PC-3 (cell line): ENCODE measurements at regions of chr13 and their contacts with region 1.

Region 1: DNA sequence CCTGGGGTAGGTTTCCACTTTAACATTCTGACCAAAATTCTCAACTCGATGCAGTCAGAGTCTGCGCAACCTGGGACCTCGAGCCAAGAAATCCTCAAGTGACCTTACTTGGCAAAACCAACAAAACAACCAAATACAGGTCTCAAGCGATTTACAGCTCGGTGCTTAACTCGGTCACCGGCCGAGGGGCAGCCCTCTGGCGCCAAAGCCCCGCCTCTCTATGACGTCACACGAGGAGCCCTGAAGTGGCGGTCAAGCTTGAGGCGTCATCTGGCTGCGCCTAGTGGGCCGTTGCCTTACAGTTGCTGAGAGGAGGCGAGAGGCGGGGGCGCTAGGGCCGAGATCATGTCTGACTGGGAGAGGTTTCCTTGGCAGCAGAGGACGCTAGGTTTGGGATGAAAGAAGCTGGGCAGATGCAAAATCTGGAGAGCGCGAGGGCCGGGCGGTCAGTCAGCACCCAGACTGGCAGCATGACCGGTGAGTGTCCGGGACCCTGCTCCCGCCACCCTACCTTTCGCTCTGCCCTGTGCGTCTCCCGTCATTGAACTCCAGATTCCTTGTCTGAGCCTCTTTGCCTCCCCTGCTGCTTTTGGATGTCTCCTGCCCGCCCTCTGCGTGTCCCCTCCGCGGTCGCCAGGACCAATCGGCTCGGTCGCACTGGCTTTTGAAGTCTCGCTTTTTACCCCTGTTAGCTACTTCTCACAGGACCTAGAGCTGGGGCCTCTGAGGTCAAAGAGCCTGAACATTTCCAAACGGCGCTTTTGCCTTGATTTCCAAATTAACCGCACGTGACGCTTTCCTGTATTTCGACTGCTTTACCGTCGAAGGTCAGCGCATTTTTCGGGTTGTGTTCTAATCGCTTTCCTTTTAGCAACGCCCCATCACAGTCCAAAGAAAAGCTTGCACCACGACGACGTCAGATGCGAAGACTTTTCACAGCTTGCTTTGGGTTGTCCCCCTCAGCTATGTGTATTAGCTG is at the start of gene CDADC1:
- DNase-seq: peak; percentile 93
- ATAC-seq: peak; percentile 92
- H3K4me3 ChIP-seq: peak within 1 kb of the TSS; percentile 87
- H3K27ac ChIP-seq: 0 out of 2 replicates have a peak within 1 kb of the TSS, but pooled peaks have one; percentile 26
- H3K4me1 ChIP-seq: no peaks in the 10 kb centered on the region
- H3K27me3 ChIP-seq: no peaks in the 10 kb centered on the region
- CTCF ChIP-seq: no peak
- total RNA-seq, gene CDADC1: 3.7 and 17.6 TPM in 2 replicates

Region 2: GRCh38 chr13:49278211-49278610 is 30.3 kb after region 1 on chr13:
- CTCF ChIA-PET with region 1: interaction called, 7 read pairs
- POLR2A ChIA-PET with region 1: no interaction called
- intact Hi-C with region 1: loop called (anchors 2 kb)
- DNase-seq: no peak
- ATAC-seq: no peak
- H3K4me3 ChIP-seq: no peak overlapping the region
- H3K27ac ChIP-seq: no peak overlapping the region
- H3K4me1 ChIP-seq: no peaks in the 10 kb centered on the region
- H3K27me3 ChIP-seq: no peaks in the 10 kb centered on the region
- CTCF ChIP-seq: no peak

Region 3: GRCh38 chr13:49347646-49348385 is 99.9 kb after region 1 on chr13:
- CTCF ChIA-PET with region 1: no interaction called
- POLR2A ChIA-PET with region 1: no interaction called
- intact Hi-C with region 1: no loop called
- DNase-seq: no peak
- ATAC-seq: no peak
- H3K4me3 ChIP-seq: no peak overlapping the region
- H3K27ac ChIP-seq: no peak overlapping the region
- H3K4me1 ChIP-seq: peaks cover 6% of the 10 kb centered on the region
- H3K27me3 ChIP-seq: no peaks in the 10 kb centered on the region
- CTCF ChIP-seq: no peak